Esophagus muscularis mucosa (tissue), 4 donors: ENCODE measurements at regions of chr2 and their contacts with region 1.

Region 1: DNA sequence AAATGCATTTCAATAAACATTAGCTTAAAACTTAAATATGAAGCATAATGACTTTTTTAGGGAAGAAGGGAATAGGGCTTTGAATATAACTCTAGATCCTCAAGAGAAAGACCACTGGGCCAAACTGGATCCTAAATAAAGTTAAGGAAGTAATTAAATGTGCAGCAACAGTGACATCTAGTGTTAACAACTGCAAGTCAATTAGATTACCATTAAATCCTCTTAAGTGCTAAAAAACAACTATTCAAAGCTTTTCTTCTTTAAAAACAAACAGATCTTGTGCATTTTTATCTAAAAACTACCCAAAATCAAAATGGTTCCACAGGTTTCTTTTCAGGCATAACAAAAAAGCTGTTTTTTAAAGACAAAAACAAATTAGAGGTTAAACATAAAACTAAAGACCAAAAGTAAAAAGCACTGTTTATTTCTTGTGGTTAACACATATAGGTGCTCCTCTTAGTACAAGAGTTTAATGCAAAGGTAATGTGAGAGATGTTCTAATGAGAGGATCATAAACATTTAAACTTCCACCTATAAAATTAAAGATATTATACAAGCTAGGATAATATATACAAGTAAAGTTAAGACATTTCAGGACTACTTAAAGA is 111.4 kb downstream of the THADA start:
- DNase-seq: no peak
- H3K4me3 ChIP-seq: no peak overlapping the region
- H3K27ac ChIP-seq: peak overlapping the region; percentile 62 to 77 (median 71)
- H3K4me1 ChIP-seq: peaks cover 22 to 40% (median 33%) of the 10 kb centered on the region in 4 donors
- H3K27me3 ChIP-seq: no peaks in the 10 kb centered on the region
- CTCF ChIP-seq: peak; percentile 66 to 81 (median 71)
- EP300 ChIP-seq: no peak
- POLR2A ChIP-seq: no peak

Region 2: DNA sequence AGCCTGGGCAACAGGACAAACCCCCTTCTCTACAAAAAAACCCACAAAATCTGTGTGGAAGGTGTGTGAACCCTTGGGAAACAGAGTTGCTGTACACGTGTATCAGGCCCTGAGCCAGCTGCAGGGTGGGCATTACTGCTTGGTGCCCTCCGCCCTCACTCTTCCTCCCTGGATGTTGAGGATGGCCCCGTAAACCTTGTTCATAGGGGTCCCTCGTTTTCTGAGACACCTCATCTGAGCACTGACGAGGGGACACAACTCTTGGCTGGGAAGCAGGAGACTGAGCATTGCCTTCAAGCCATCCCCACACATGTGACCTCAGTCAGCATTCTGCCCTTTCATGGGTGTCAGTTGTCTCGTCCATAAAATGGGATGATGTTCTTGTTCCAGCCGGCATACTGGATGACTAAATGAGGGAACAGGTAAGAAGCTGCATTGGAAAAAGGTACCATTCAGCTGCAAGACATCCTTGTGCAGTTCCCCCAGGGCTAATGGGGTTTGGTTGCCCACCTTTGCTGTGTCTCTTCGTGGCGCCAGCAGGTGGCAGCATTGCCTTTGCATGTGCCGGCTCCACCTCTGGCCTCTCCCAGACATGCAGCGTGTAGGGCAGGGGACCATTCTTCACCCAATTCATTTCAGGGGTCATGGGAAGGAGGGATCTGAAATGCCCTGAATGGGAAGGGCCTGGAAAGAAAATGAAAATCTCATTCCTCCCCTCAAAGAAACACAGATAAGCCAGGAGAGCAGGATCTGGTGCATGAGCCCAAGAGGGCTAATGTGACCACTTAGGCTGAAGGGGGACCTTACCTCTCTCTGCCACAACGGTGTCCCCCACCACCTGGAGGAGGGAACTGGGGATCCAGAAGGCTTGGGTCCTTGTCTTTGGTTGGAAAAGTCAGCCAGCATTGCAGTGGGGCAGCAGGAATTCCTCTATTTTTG is 655.7 kb before region 1 on chr2:
- intact Hi-C with region 1: loop called (anchors 2 kb)
- DNase-seq: no peak
- H3K4me3 ChIP-seq: no peak overlapping the region
- H3K27ac ChIP-seq: peak overlapping the region; percentile 19 to 65 (median 44)
- H3K4me1 ChIP-seq: peaks cover 24 to 40% (median 38%) of the 10 kb centered on the region in 4 donors
- H3K27me3 ChIP-seq: no peaks in the 10 kb centered on the region
- CTCF ChIP-seq: peak; percentile 93 to 94 (median 93)
- EP300 ChIP-seq: no peak
- POLR2A ChIP-seq: no peak

Region 3: DNA sequence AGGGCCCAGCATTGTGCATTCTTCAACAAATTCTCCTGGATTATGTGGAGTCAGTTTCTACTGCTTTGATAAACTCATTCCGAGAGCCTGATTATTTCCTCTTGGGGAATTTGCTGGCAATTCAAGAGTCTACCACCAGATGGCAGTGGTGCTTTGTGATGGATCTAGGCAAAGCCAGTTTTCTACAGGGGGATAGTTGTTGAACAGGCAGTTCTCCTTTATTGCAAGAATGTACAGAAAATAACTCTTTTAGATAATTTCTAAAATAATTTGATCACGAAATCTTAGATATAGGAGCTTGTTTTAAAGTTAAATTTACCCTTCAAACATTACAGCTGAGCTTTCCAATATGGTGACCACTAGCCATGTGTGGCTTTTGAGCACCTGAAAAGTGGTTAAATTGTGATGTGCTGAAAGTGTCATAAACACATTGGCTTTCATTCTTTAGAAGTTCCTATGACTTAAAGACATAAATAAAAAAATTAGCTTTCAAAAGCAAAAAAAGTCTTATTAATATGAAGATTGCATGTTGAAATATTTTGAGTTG is 625.3 kb before region 1 on chr2:
- intact Hi-C with region 1: loop called (anchors 10 kb)
- DNase-seq: no peak
- H3K4me3 ChIP-seq: no peak overlapping the region
- H3K27ac ChIP-seq: peak overlapping the region in 1 of 4 donors; percentile 17
- H3K4me1 ChIP-seq: peaks cover 6 to 18% (median 17%) of the 10 kb centered on the region in 4 donors
- H3K27me3 ChIP-seq: no peaks in the 10 kb centered on the region
- CTCF ChIP-seq: peak; percentile 91 to 95 (median 93)
- EP300 ChIP-seq: no peak
- POLR2A ChIP-seq: no peak

Region 4: DNA sequence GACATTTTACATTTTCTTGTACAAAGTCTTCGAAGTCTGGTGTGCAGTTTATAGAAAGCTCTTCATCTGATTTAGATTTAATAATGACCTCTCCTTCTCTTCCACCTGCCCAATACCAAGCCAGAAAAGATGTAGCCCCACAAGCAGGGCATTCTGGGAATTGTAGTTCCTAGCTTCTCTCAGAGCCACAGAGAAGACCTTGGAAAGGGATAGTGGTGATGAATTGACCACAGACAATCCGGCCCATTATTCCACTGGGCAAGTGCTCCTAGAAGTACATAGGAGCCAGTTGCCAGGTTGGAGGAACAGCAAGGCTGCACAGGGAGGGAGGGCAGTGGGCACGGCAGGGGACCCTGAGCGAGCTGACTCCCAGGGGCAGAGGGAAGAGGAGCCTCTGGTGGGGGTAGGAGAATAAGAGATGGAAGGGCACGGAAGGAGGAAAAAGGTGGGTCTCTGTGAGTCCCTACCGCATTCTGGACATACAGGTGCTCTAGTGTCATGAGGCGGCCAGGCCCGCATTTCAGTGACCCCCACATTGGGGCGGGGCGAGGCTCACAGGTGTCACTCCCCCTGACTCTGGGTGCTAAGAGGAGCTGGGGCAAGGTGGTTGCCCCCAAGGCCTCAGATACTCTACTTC is 539.5 kb before region 1 on chr2:
- intact Hi-C with region 1: loop called (anchors 10 kb)
- DNase-seq: no peak
- H3K4me3 ChIP-seq: no peak overlapping the region
- H3K27ac ChIP-seq: no peak overlapping the region
- H3K4me1 ChIP-seq: peaks cover 9 to 18% (median 16%) of the 10 kb centered on the region in 4 donors
- H3K27me3 ChIP-seq: no peaks in the 10 kb centered on the region
- CTCF ChIP-seq: no peak
- EP300 ChIP-seq: no peak
- POLR2A ChIP-seq: no peak

Region 5: GRCh38 chr2:42974721-42975717 is 509.4 kb before region 1 on chr2:
- intact Hi-C with region 1: loop called (anchors 2 kb)
- DNase-seq: no peak
- H3K4me3 ChIP-seq: peak overlapping the region; percentile 50 to 58 (median 52)
- H3K27ac ChIP-seq: peak overlapping the region; percentile 53 to 60 (median 56)
- H3K4me1 ChIP-seq: peaks cover 12 to 25% (median 20%) of the 10 kb centered on the region in 4 donors
- H3K27me3 ChIP-seq: no peaks in the 10 kb centered on the region
- CTCF ChIP-seq: peak; percentile 90 to 96 (median 90)
- EP300 ChIP-seq: no peak
- POLR2A ChIP-seq: no peak

Region 6: DNA sequence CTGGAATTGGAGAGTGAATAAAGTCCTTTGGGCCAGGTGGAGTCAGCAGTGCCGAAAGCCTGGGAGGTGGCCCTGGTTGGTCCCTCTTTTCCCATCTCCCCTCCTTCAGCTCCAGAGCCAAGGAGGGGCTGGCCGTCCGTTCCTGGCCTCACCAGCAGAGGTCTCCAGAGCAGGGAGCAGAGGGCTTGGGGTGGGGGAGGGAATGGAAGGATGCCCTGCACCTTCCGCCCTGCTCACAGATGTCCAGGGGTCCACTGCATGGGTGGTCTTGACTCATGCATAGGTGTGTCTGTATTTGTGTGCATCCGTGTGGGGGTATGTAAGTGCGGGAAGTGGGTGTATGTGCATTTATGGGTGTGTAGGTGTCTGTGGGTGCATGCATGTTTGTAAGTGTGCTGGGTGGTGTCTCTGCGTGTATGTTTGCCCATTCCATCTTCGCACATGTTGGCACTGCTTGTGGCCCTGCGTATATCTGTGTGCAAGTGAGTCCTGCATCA is 459.9 kb before region 1 on chr2:
- intact Hi-C with region 1: loop called (anchors 5 kb)
- DNase-seq: no peak
- H3K4me3 ChIP-seq: no peak overlapping the region
- H3K27ac ChIP-seq: peak overlapping the region in 1 of 4 donors; percentile 55
- H3K4me1 ChIP-seq: peaks cover 19 to 36% (median 28%) of the 10 kb centered on the region in 4 donors
- H3K27me3 ChIP-seq: no peaks in the 10 kb centered on the region
- CTCF ChIP-seq: peak; percentile 91 to 93 (median 93)
- EP300 ChIP-seq: no peak
- POLR2A ChIP-seq: no peak